Activated CD8-positive, alpha-beta T cell treated with anti-CD3 and anti-CD28 coated beads, Interleukin-2, amount 10 ng/mL, durations not matched to agents 7 days and 5 days (primary cell): ENCODE measurements at regions of chr19 and their contacts with region 1.

Region 1: DNA sequence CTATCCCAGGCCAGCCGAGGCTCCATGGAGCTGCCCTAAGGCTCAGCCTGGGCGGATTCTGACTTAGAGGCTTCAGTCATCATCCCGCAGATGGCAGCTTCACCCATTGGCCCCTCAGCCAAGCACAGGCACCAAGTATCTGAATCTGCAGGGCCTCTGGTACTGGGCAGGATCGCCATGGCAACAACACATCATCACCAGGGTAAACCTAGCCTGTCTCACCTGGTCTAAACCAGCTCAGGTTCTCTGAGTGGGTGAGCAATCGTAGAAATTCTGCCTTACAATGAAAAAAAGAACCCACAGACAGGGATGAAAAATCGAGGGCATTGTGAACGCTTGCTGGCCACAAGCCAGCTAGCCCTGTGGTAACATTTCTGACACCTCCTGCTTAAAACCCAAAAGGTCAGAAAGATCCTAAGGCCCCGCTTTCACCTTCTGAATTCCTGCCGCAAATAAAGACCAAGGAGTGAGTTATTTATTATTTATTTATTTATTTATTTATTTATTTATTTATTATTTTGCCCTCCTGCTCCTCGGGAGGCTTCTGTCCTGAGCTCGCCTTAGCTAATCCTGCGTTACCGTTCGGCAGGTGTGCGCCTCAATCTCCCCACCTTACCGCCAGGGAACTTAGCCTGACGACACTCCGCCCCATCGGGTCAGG is 12.0 kb upstream of the CEACAM21 start:
- DNase-seq: peak; percentile 54
- ATAC-seq: peak; percentile 68
- H3K4me3 Mint-ChIP-seq: peak overlapping the region; percentile 30
- H3K27ac Mint-ChIP-seq: no peak overlapping the region
- H3K4me1 Mint-ChIP-seq: peaks cover 43% of the 10 kb centered on the region
- H3K27me3 Mint-ChIP-seq: peaks cover 28% of the 10 kb centered on the region

Region 2: DNA sequence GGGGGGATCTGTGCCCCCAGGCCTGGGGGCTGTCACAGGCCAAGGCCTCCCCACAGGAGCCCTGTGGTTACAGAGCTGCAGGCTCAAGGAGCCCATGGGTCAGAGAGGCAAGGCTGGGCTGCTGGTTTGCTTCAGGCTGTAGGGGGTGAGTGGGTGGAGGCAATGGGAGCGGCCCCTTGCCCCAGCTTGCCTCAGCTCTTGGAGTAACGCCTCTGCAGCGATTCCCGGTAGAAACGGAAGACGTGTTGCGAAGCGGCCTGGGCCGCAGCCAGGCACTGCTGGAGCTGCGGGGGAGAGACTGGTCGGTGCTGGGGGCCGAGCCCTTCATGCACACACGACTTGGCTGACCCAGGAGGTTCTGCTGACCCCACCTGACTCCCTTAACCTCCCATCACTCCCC is 177.5 kb before region 1 on chr19:
- CTCF ChIA-PET with region 1: no interaction called
- POLR2A ChIA-PET with region 1: no interaction called
- DNase-seq: no peak
- ATAC-seq: no peak
- H3K4me3 Mint-ChIP-seq: no peak overlapping the region
- H3K27ac Mint-ChIP-seq: no peak overlapping the region
- H3K4me1 Mint-ChIP-seq: no peaks in the 10 kb centered on the region
- H3K27me3 Mint-ChIP-seq: no peaks in the 10 kb centered on the region

Region 3: DNA sequence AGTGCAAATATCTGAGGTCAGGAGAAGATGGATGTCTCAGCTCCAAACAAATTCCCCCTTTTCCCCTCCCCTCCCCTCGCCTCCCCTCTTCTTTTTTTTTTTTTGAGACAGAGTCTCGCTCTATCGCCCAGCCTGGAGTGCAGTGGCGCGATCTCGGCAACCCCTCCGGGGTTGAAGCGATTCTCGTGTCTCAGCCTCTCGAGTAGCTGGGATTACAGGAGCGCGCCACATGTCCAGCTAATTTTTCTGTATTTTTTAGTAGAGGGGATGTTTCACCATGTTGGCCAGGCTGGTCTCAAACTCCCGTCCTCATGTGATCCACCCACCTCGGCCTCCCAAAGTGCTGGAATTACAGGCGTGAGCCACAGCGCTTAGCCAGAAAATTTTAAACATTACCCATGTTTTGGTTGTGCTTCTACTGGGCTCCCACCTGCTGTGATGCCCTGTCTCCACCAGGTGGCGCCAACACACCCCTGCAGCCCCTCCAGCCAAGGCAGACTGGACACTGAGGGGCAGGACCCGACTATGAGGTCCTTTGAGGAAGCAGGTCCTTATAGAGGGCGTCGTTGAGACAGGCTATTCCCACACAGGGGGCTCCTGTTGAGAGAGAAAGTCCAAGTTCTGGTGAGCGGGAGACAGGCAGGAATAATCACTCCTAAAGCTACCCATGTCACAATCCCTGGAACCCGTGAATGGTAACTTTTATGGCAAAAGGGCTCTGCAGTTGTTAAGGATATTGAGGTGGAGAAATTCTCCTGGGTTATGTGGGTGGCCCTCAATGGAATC is 114.7 kb before region 1 on chr19:
- CTCF ChIA-PET with region 1: interaction called, 118 read pairs
- POLR2A ChIA-PET with region 1: no interaction called
- DNase-seq: peak; percentile 78
- ATAC-seq: peak; percentile 88
- H3K4me3 Mint-ChIP-seq: peak overlapping the region; percentile 51
- H3K27ac Mint-ChIP-seq: no peak overlapping the region
- H3K4me1 Mint-ChIP-seq: peaks cover 25% of the 10 kb centered on the region
- H3K27me3 Mint-ChIP-seq: peaks cover 23% of the 10 kb centered on the region

Region 4: GRCh38 chr19:41531438-41532311 is 32.3 kb before region 1 on chr19:
- CTCF ChIA-PET with region 1: interaction called, 16 read pairs
- POLR2A ChIA-PET with region 1: no interaction called
- DNase-seq: peak; percentile 88
- ATAC-seq: peak; percentile 75
- H3K4me3 Mint-ChIP-seq: peak overlapping the region; percentile 73
- H3K27ac Mint-ChIP-seq: peak overlapping the region; percentile 80
- H3K4me1 Mint-ChIP-seq: peaks cover 69% of the 10 kb centered on the region
- H3K27me3 Mint-ChIP-seq: peaks cover 26% of the 10 kb centered on the region

Region 5: GRCh38 chr19:41548954-41549688 is 14.9 kb before region 1 on chr19:
- CTCF ChIA-PET with region 1: interaction called, 126 read pairs
- POLR2A ChIA-PET with region 1: interaction called, 29 read pairs
- DNase-seq: peak; percentile 85
- ATAC-seq: peak; percentile 74
- H3K4me3 Mint-ChIP-seq: peak overlapping the region; percentile 86
- H3K27ac Mint-ChIP-seq: peak overlapping the region; percentile 87
- H3K4me1 Mint-ChIP-seq: peaks cover 47% of the 10 kb centered on the region
- H3K27me3 Mint-ChIP-seq: no peaks in the 10 kb centered on the region

Region 6: DNA sequence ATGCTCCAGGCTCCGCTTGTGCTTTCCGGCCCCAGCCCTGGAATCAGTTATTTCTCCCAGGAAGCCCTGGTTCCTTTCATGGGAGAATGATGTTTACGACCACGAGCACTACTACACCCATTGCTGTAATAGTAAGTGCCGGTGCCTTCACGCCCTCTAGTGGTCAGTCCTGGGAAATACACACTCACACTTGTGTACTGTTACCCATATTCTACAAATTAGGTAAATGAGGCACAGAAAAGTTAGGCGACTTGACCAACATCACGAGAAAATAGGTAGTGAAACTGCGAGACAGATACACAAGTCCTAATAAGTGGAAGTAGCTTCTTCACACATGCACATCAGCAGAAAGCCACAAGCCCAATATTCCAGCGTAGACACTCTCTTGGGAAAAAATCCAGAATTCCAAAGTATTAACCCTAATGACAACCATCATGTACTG is 33.6 kb after region 1 on chr19:
- CTCF ChIA-PET with region 1: interaction called, 14 read pairs
- POLR2A ChIA-PET with region 1: no interaction called
- DNase-seq: peak; percentile 84
- ATAC-seq: peak; percentile 84
- H3K4me3 Mint-ChIP-seq: no peak overlapping the region
- H3K27ac Mint-ChIP-seq: no peak overlapping the region
- H3K4me1 Mint-ChIP-seq: peaks cover 7% of the 10 kb centered on the region
- H3K27me3 Mint-ChIP-seq: peaks cover 27% of the 10 kb centered on the region